Caco-2 (cell line): ENCODE measurements at regions of chr4 and their contacts with region 1.

Region 1: GRCh38 chr4:123776254-123776653 is 379.7 kb downstream of the SPRY1 start:
- DNase-seq: no peak
- H3K4me3 ChIP-seq: no peak overlapping the region
- H3K4me3 Mint-ChIP-seq: no peak overlapping the region
- H3K27ac Mint-ChIP-seq: no peak overlapping the region
- H3K4me1 ChIP-seq: no peaks in the 10 kb centered on the region
- H3K4me1 Mint-ChIP-seq: no peaks in the 10 kb centered on the region
- H3K27me3 ChIP-seq: no peaks in the 10 kb centered on the region; the same call in 1 of the 2 replicates
- H3K27me3 Mint-ChIP-seq: peaks cover 2% of the 10 kb centered on the region
- CTCF ChIP-seq: no peak

Region 2: DNA sequence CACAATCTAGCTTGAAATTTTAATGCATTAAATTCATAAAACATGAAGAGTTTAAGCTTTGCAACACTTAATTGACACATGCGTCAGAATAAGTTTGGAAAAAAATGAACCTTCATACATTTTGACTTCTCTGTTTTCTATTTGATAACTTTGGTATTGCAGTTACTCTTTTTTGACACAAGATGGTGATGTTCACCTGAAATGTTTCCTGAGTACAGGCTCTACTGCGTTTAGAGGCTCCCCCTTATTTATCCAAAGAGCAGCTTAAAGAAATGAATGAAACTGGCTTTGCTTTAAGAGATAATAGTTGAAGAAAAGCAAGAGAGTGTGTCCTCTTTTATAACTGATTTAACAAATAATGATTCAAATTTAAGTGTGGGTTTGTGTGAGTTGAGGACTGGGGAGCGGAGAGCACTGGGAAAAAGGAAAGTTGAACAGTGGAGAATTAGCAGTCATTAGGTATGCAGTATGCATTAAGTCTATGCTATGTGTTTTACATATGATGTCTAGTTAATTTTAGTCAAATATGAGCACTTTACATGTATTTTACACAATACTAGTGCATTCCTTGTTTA is 673.3 kb before region 1 on chr4:
- CTCF ChIA-PET with region 1: interaction called, 3 read pairs
- POLR2A ChIA-PET with region 1: no interaction called
- intact Hi-C with region 1: loop called (anchors 10 kb)
- DNase-seq: peak in 1 of 2 experiments; percentile 34
- H3K4me3 ChIP-seq: no peak overlapping the region
- H3K4me3 Mint-ChIP-seq: no peak overlapping the region
- H3K27ac Mint-ChIP-seq: peak overlapping the region; percentile 3
- H3K4me1 ChIP-seq: peaks cover 3% of the 10 kb centered on the region; the same call in 1 of the 2 replicates
- H3K4me1 Mint-ChIP-seq: peaks cover 9% of the 10 kb centered on the region
- H3K27me3 ChIP-seq: no peaks in the 10 kb centered on the region
- H3K27me3 Mint-ChIP-seq: no peaks in the 10 kb centered on the region
- CTCF ChIP-seq: peak; percentile 46 to 57

Region 3: DNA sequence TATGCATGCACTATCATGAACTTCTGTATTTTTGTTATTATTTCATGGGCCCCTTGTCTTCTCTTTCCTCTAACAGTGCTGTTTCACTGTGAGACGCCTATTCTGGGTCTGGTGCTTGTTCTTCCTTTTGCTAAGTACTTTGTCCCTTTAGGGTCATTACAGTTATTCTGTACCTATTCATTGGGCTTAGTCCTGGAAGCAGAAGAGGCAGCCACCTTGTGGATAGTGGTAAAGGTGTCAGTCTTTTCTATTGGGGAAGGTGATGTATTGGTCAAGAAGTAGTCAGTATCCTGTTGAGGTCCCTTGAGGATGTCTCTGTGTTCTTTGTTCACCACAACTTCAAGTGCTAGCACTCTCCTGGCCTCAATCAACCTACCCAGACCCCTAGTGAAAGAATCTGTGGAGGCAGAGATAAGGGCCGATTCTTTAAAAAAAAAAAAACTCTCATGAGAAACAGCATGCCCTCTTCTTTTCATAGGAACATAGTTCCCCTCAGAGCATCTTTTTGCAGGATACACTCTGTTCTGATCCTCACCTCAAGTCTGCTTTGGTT is 214.1 kb after region 1 on chr4:
- CTCF ChIA-PET with region 1: no interaction called
- POLR2A ChIA-PET with region 1: no interaction called
- intact Hi-C with region 1: loop called (anchors 1 kb)
- DNase-seq: no peak
- H3K4me3 ChIP-seq: no peak overlapping the region
- H3K4me3 Mint-ChIP-seq: no peak overlapping the region
- H3K27ac Mint-ChIP-seq: no peak overlapping the region
- H3K4me1 ChIP-seq: no peaks in the 10 kb centered on the region
- H3K4me1 Mint-ChIP-seq: no peaks in the 10 kb centered on the region
- H3K27me3 ChIP-seq: no peaks in the 10 kb centered on the region
- H3K27me3 Mint-ChIP-seq: no peaks in the 10 kb centered on the region
- CTCF ChIP-seq: peak in 1 of 2 experiments; percentile 37

Region 4: GRCh38 chr4:124262211-124263179 is 486.2 kb after region 1 on chr4:
- CTCF ChIA-PET with region 1: no interaction called
- POLR2A ChIA-PET with region 1: no interaction called
- intact Hi-C with region 1: loop called (anchors 1 kb)
- DNase-seq: peak; percentile 58 to 74
- H3K4me3 ChIP-seq: no peak overlapping the region
- H3K4me3 Mint-ChIP-seq: no peak overlapping the region
- H3K27ac Mint-ChIP-seq: no peak overlapping the region
- H3K4me1 ChIP-seq: no peaks in the 10 kb centered on the region
- H3K4me1 Mint-ChIP-seq: no peaks in the 10 kb centered on the region
- H3K27me3 ChIP-seq: no peaks in the 10 kb centered on the region
- H3K27me3 Mint-ChIP-seq: peaks cover 6% of the 10 kb centered on the region
- CTCF ChIP-seq: peak; percentile 77 to 79

Region 5: DNA sequence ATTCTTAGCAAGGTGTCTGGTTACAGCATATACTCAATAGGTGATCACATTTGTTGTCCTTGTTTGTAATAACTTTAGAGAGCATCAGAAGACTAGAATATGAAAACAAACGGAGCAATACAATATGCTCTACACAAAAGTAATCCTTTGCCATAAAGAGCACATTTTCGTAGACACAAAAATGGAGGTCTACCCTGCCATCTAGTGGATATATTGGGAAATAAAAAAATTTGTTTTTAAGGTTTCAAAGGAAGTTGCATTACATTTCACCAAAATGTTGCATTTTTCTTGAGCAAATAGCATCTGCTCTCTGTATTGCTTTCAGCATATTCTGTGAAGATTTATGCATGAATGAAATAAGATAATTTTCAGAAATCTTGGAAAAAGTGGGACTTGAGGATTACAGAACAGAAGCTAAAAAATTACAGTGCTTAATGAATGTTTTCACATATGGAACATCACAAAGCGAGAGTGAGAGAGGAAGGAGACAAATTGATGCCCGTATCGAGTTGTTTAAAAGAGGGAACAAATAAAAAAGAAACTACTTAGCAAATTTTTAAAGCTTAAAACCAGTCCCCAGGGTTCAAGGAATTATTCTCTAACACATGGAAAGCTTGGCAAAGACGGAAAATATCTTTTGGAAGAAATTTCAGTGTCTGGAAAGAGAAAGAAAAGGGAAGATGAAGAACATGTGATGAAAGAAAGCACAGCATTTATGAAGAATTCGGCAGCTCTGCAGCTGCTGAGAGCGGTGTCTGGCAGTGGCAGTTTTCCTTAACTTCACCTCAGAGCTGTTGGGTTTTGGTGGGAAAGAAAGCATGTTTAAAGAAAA is 546.2 kb after region 1 on chr4:
- CTCF ChIA-PET with region 1: no interaction called
- POLR2A ChIA-PET with region 1: no interaction called
- intact Hi-C with region 1: loop called (anchors 2 kb)
- DNase-seq: peak in 1 of 2 experiments; percentile 3
- H3K4me3 ChIP-seq: no peak overlapping the region
- H3K4me3 Mint-ChIP-seq: no peak overlapping the region
- H3K27ac Mint-ChIP-seq: no peak overlapping the region
- H3K4me1 ChIP-seq: no peaks in the 10 kb centered on the region
- H3K4me1 Mint-ChIP-seq: no peaks in the 10 kb centered on the region
- H3K27me3 ChIP-seq: no peaks in the 10 kb centered on the region
- H3K27me3 Mint-ChIP-seq: peaks cover 4% of the 10 kb centered on the region
- CTCF ChIP-seq: peak; percentile 42 to 62